HCT116 (cell line): ENCODE measurements at regions of chr18 and their contacts with region 1.

Region 1: DNA sequence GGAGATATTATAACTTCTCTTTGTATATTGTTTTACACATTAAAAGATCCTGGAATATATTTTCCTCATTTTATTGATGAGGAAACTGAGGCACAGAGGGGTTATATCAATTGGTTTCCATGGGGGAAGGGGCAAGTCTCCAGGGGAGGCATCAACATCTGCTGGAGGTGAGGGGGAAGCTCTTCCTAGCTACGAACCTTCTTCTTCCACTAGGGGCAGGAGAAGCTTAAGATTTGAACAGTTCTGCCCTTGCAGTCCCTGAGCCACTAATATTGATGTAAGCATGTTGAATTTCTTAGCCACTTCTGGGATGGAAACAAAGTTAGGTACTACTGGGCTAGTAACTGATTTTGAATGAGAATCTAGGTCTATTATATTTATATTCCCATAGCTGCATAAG is 140.1 kb upstream of the AQP4 start:
- DNase-seq: peak; percentile 10
- ATAC-seq: peak; percentile 82
- H3K4me3 ChIP-seq: no peak overlapping the region
- H3K27ac ChIP-seq: no peak overlapping the region
- H3K4me1 ChIP-seq: no peaks in the 10 kb centered on the region
- H3K27me3 ChIP-seq: peaks cover 7% of the 10 kb centered on the region; the same call in 1 of the 2 replicates
- CTCF ChIP-seq: peak in 2 of 3 experiments; percentile 55 to 57; a peak in 4 of 6 replicates
- POLR2A ChIP-seq: no peak
- RAD21 ChIP-seq: peak; percentile 33

Region 2: DNA sequence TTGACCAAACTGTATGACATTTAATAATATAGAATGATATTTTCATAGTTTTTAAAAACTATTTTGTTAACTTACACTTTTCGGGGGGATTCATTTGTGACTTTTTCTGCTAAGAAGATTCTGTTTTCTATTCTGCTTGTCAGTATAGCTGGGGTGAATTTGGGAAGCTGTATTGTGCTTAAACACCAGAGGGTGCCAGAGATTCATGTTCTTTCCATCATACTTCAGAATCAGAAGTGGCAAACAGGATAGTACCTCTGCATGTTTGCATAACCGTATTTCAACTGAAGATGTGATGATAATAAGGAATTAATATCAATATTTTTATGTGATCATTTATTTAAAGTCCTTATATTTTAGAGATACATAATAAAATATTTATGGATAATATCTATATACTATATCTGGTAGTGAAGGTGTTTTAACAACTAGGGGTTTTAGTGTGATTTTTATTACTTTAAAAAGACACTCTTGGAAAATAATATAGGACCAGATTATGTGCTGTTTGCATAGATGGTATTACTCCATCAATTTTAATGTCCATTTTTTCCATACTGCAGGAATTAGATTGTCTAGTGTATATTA is 698.3 kb before region 1 on chr18:
- CTCF ChIA-PET with region 1: interaction called, 5 read pairs
- POLR2A ChIA-PET with region 1: no interaction called
- RAD21 ChIA-PET with region 1: no interaction called
- intact Hi-C with region 1: loop called (anchors 10 kb)
- DNase-seq: peak; percentile 15
- ATAC-seq: peak; percentile 71
- H3K4me3 ChIP-seq: no peak overlapping the region
- H3K27ac ChIP-seq: no peak overlapping the region
- H3K4me1 ChIP-seq: no peaks in the 10 kb centered on the region
- H3K27me3 ChIP-seq: no peaks in the 10 kb centered on the region
- CTCF ChIP-seq: peak; percentile 48 to 67 (median 62); a peak in 5 of 6 replicates
- POLR2A ChIP-seq: no peak
- RAD21 ChIP-seq: peak; percentile 71

Region 3: DNA sequence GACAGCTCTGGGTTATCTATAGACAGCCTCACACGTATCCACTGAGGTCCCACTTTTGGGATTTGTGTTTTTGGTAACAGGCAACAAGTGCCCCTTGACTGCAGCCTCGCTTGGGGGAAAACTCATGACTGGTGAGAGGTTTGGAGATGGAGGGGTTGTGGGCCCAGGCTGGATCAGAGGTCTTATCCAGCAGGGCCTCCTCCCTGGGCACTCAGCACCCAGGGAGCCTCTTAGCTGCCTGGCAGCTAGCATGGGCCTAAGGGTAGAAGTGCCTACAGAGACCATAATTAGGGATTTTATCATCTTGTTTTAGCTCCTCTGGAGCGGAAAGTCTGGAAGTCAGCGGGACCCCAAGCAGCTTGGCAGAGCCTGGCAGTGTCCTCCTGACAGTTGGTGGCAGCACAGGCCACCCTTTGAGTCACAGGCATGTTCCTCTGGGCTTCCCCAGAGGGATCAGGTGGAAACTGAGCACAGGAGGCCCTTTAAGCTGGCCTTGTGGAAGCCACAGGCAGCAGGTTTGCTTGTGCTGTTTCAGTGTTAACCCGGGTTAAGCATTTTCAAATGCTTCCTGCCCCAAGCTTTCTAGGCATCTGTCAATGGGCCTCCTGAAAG is 600.3 kb before region 1 on chr18:
- CTCF ChIA-PET with region 1: interaction called, 3 read pairs
- POLR2A ChIA-PET with region 1: no interaction called
- RAD21 ChIA-PET with region 1: no interaction called
- intact Hi-C with region 1: loop called (anchors 5 kb)
- DNase-seq: peak; percentile 36
- ATAC-seq: peak; percentile 96
- H3K4me3 ChIP-seq: no peak overlapping the region
- H3K27ac ChIP-seq: no peak overlapping the region
- H3K4me1 ChIP-seq: no peaks in the 10 kb centered on the region; a peak in 1 of 4 replicates
- H3K27me3 ChIP-seq: no peaks in the 10 kb centered on the region
- CTCF ChIP-seq: peak; percentile 56 to 75 (median 64); a peak in 5 of 6 replicates
- POLR2A ChIP-seq: no peak
- RAD21 ChIP-seq: peak; percentile 90

Region 4: GRCh38 chr18:26804519-26804918 is 201.1 kb before region 1 on chr18:
- CTCF ChIA-PET with region 1: interaction called, 7 read pairs
- POLR2A ChIA-PET with region 1: no interaction called
- RAD21 ChIA-PET with region 1: interaction called in 1 of 2 experiments, 3 read pairs
- intact Hi-C with region 1: loop called (anchors 2 kb)
- DNase-seq: no peak
- ATAC-seq: peak; percentile 58; the same call in 1 of the 2 replicates
- H3K4me3 ChIP-seq: no peak overlapping the region
- H3K27ac ChIP-seq: no peak overlapping the region
- H3K4me1 ChIP-seq: no peaks in the 10 kb centered on the region
- H3K27me3 ChIP-seq: no peaks in the 10 kb centered on the region
- CTCF ChIP-seq: peak; percentile 18 to 52 (median 38); a peak in 4 of 6 replicates
- POLR2A ChIP-seq: no peak
- RAD21 ChIP-seq: peak; percentile 42; the same call in 1 of the 2 replicates

Region 5: DNA sequence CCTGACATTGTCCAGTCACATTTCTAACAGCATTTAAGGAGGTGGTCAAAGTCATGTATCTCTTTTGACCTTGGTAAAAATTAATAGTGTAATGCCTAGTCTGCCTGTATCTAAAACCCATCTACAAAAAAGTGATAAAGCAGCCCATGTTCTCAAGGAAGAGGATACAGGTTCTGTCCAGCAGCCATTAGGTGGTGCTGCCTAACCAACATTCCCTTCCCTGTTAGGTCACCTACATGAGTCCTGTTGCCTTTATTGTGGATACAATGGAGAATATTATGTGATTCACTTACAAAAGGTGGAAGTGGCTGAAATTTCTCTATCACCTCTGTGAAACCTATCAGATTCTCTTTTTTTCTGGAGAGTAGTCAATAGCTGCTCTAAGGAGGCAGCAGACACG is 192.5 kb before region 1 on chr18:
- CTCF ChIA-PET with region 1: interaction called, 5 read pairs
- POLR2A ChIA-PET with region 1: no interaction called
- RAD21 ChIA-PET with region 1: no interaction called
- intact Hi-C with region 1: loop called (anchors 2 kb)
- DNase-seq: peak; percentile 44
- ATAC-seq: peak; percentile 86
- H3K4me3 ChIP-seq: no peak overlapping the region
- H3K27ac ChIP-seq: no peak overlapping the region
- H3K4me1 ChIP-seq: no peaks in the 10 kb centered on the region
- H3K27me3 ChIP-seq: no peaks in the 10 kb centered on the region
- CTCF ChIP-seq: peak; percentile 44 to 67 (median 49); a peak in 4 of 6 replicates
- POLR2A ChIP-seq: no peak
- RAD21 ChIP-seq: peak; percentile 70

Region 6: DNA sequence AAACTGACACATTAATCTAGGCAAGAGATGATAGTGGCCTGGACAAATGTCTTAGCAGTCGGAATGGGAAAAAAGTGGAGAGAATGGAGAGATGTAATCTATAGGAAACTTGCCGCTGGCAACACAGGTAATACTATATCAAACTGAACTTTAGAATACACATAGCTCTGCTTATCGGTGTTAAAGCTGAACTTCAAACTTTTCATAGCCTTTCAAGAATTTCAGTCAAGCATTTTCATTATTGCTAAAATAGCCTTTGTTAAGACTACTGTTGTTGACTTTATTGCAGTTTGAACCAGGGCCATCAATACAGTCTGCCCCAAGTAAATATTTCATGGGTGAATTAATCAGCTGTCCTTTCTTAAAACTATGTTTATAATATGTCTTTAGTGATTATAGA is 192.4 kb after region 1 on chr18:
- CTCF ChIA-PET with region 1: no interaction called
- POLR2A ChIA-PET with region 1: no interaction called
- RAD21 ChIA-PET with region 1: no interaction called
- intact Hi-C with region 1: no loop called
- DNase-seq: no peak
- ATAC-seq: no peak
- H3K4me3 ChIP-seq: no peak overlapping the region
- H3K27ac ChIP-seq: no peak overlapping the region
- H3K4me1 ChIP-seq: no peaks in the 10 kb centered on the region
- H3K27me3 ChIP-seq: no peaks in the 10 kb centered on the region
- CTCF ChIP-seq: no peak
- POLR2A ChIP-seq: no peak
- RAD21 ChIP-seq: no peak